Left cardiac atrium (tissue), 4 donors: ENCODE measurements at regions of chr2 and their contacts with region 1.

Region 1: GRCh38 chr2:14428056-14428455 is 204.5 kb upstream of the LRATD1 start:
- DNase-seq: no peak
- ATAC-seq: peak; percentile 30 to 62

Region 2: GRCh38 chr2:14182227-14182946 is 245.7 kb before region 1 on chr2:
- intact Hi-C with region 1: no loop called
- DNase-seq: no peak
- ATAC-seq: no peak

Region 3: GRCh38 chr2:14480906-14481305 is 52.9 kb after region 1 on chr2:
- intact Hi-C with region 1: no loop called
- DNase-seq: no peak
- ATAC-seq: no peak

Region 4: DNA sequence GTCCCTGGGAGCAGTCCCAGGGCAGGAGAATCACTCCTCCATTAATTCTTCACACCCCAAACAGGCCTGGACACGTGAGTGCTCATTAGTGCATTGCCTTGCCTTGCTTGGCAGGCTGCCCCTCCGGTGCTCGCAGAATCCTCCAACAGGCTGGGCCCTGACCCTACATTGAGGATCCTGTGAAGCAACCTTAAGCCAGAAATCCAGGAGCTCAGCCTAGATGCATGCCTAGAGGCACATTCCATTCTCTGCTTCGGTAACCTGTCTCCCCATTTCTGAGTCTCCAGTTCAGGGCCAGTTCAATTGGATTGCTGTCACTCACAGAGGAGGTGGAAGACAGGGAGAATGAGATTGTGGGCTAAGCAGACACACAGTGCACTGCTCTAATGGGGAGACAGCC is 107.1 kb after region 1 on chr2:
- intact Hi-C with region 1: no loop called
- DNase-seq: no peak
- ATAC-seq: no peak

Region 5: GRCh38 chr2:14634885-14635871 is 207.1 kb after region 1 on chr2:
- intact Hi-C with region 1: loop called in 1 of 2 experiments (anchors 5 kb)
- DNase-seq: peak; percentile 81
- ATAC-seq: peak; percentile 27 to 47